Activated naive CD4-positive, alpha-beta T cell treated with anti-CD3 and anti-CD28 coated beads for 36 hours (primary cell): ENCODE measurements at regions of chr5 and their contacts with region 1.

Region 1: DNA sequence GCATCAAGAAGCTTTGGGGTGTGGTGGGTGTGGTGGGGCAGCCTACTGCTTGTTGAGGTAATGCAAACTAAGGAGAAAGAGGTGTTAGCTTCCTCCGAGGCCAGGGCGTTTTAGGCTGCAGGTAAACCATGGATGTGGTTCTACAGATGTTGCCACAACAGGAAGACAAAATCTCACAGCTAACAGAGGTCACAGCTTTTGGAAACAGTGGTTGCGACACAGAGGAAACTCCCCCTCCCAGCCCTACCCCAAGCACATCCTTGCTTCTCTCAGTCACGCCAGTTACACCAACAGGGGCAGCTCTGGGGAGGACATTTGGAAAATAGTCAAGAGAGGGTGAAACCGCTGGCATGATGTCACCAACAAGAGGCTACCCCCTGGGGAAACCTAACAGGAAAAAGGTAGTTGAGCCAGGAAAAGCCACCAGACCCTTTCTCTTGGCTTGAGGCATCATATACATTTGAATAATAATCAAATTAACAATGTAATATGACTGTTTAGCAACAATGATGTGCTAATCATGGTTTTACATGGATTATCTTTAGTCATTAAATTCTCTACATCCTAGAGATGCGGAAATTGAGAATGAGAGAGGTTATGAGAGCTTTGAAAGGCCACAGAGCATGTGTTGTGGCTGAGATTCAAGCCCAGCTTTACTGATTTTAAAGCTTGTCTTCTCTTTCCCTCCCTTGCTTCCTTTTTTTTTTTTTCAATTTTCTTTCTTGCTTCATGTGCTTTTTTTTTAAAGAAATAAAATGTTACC is 82.2 kb upstream of the IL12B start:
- DNase-seq: peak; percentile 86
- H3K4me3 Mint-ChIP-seq: no peak overlapping the region
- H3K27ac Mint-ChIP-seq: peak overlapping the region; percentile 37
- H3K4me1 Mint-ChIP-seq: peaks cover 54% of the 10 kb centered on the region
- H3K27me3 Mint-ChIP-seq: peaks cover 3% of the 10 kb centered on the region

Region 2: GRCh38 chr5:158354958-158355357 is 1057.5 kb before region 1 on chr5:
- CTCF ChIA-PET with region 1: no interaction called
- intact Hi-C with region 1: loop called (anchors 1 kb)
- DNase-seq: no peak
- H3K4me3 Mint-ChIP-seq: no peak overlapping the region
- H3K27ac Mint-ChIP-seq: peak overlapping the region; percentile 46
- H3K4me1 Mint-ChIP-seq: peaks cover 16% of the 10 kb centered on the region
- H3K27me3 Mint-ChIP-seq: no peaks in the 10 kb centered on the region

Region 3: GRCh38 chr5:159178978-159179377 is 233.5 kb before region 1 on chr5:
- CTCF ChIA-PET with region 1: no interaction called
- intact Hi-C with region 1: loop called (anchors 1 kb)
- DNase-seq: peak; percentile 63
- H3K4me3 Mint-ChIP-seq: no peak overlapping the region
- H3K27ac Mint-ChIP-seq: peak overlapping the region; percentile 96
- H3K4me1 Mint-ChIP-seq: peaks cover 78% of the 10 kb centered on the region
- H3K27me3 Mint-ChIP-seq: no peaks in the 10 kb centered on the region

Region 4: DNA sequence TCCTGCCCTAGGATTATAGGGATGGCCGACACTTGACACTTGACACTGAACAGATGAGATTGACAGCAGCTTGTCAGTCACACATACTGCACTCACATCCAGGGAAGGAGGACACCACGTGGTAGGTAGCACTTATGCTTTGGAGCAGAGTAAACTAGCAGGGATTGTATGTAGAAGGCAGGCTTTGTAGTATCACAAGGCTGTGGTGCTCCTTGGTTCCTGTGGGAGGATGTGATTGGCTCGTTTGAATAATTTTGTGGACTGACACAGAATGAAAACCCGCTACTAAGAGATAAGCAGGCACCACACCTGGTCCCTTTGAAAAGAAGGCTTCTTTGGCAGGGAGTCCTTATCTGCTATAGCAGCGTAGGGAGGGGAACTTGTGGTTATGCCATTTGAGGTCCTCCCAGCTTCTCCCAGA is 18.6 kb before region 1 on chr5:
- CTCF ChIA-PET with region 1: no interaction called
- intact Hi-C with region 1: no loop called
- DNase-seq: no peak
- H3K4me3 Mint-ChIP-seq: no peak overlapping the region
- H3K27ac Mint-ChIP-seq: no peak overlapping the region
- H3K4me1 Mint-ChIP-seq: no peaks in the 10 kb centered on the region
- H3K27me3 Mint-ChIP-seq: no peaks in the 10 kb centered on the region

Region 5: GRCh38 chr5:159427180-159428012 is 14.9 kb after region 1 on chr5:
- CTCF ChIA-PET with region 1: interaction called, 3 read pairs
- intact Hi-C with region 1: loop called (anchors 1 kb)
- DNase-seq: peak; percentile 10
- H3K4me3 Mint-ChIP-seq: no peak overlapping the region
- H3K27ac Mint-ChIP-seq: no peak overlapping the region
- H3K4me1 Mint-ChIP-seq: peaks cover 20% of the 10 kb centered on the region
- H3K27me3 Mint-ChIP-seq: no peaks in the 10 kb centered on the region

Region 6: GRCh38 chr5:159489779-159490178 is 77.3 kb after region 1 on chr5:
- CTCF ChIA-PET with region 1: no interaction called
- intact Hi-C with region 1: no loop called
- DNase-seq: no peak
- H3K4me3 Mint-ChIP-seq: no peak overlapping the region
- H3K27ac Mint-ChIP-seq: no peak overlapping the region
- H3K4me1 Mint-ChIP-seq: no peaks in the 10 kb centered on the region
- H3K27me3 Mint-ChIP-seq: peaks cover 2% of the 10 kb centered on the region

Region 7: GRCh38 chr5:160008877-160009590 is 596.6 kb after region 1 on chr5 and contains the start of gene TTC1:
- CTCF ChIA-PET with region 1: no interaction called
- intact Hi-C with region 1: loop called (anchors 1 kb)
- DNase-seq: peak; percentile 98
- H3K4me3 Mint-ChIP-seq: peak within 1 kb of the TSS; percentile 98
- H3K27ac Mint-ChIP-seq: peak within 1 kb of the TSS; percentile 94
- H3K4me1 Mint-ChIP-seq: peaks cover 27% of the 10 kb centered on the region
- H3K27me3 Mint-ChIP-seq: no peaks in the 10 kb centered on the region
- total RNA-seq, gene TTC1: 46.0 to 47.1 TPM